A549 (cell line): ENCODE measurements at regions of chr12 and their contacts with region 1.

Region 1: DNA sequence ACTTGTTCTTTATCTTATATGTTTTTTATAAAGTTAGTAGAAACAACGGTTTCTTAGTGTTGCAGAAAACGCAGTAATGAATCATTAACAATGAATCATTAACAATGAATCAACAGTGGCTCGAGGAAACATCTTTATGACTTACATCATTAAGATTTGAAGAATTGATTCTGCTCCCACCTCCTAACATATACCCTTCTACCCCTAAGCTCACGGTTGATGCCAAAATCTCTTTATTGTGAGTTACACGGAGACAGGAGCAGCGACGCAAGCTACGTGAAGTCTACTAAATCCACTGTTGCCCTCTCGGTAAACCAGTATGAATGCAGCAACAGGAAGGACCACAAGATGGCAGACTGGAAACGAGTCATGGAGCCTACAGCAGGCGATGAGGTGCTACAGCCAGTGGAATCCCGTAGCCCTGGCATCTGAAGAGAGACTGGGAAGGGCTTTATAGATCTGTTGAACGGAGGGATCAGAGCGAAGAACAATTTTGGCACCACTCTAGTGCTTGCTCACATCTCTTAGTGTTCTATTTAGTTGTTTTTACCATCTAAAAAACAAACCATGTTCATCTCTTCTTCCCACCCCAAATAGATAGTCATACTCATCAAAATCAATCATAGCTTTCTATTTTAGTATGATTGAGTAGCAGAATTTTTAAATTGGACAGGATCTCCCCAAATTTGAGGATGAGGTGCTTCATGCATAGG is 332.7 kb downstream of the DUSP6 start:
- DNase-seq: peak; percentile 57 to 88
- ATAC-seq: peak; percentile 98 to 99
- H3K4me3 ChIP-seq: peak overlapping the region; percentile 43
- H3K27ac ChIP-seq: peak overlapping the region; percentile 36 to 66; a peak in 5 of 6 replicates
- H3K4me1 ChIP-seq: peaks cover 10% of the 10 kb centered on the region; the same call in 2 of the 3 replicates
- CTCF ChIP-seq: peak; percentile 92
- EP300 ChIP-seq: no peak
- POLR2A ChIP-seq: no peak
- RAD21 ChIP-seq: peak; percentile 92 to 95

Region 2: DNA sequence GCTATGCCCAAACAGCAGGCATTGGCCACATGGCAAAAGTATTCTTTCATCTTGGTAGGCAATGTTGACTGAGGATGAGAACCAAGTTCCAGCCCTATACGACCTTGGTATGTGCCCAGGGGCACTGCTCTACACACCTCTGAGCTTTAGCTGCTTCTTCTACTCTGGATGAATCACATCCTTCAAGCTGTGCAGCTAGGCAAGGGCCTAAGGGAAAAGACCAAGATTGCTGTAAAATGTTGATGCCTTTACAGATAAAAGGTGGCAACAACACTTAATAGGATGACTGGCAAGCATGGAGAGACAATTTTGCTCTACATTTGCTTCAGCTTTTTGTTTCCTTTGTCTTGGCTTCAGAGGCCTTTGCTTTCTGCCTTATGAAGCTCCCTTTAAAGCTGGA is 256.0 kb before region 1 on chr12:
- CTCF ChIA-PET with region 1: no interaction called
- POLR2A ChIA-PET with region 1: no interaction called
- DNase-seq: no peak
- ATAC-seq: no peak
- H3K4me3 ChIP-seq: no peak overlapping the region
- H3K27ac ChIP-seq: no peak overlapping the region
- H3K4me1 ChIP-seq: no peaks in the 10 kb centered on the region
- CTCF ChIP-seq: no peak
- EP300 ChIP-seq: no peak
- POLR2A ChIP-seq: no peak
- RAD21 ChIP-seq: no peak

Region 3: GRCh38 chr12:89029961-89030360 is 10.4 kb after region 1 on chr12:
- CTCF ChIA-PET with region 1: interaction called, 13 read pairs
- POLR2A ChIA-PET with region 1: no interaction called
- DNase-seq: no peak
- ATAC-seq: no peak
- H3K4me3 ChIP-seq: no peak overlapping the region
- H3K27ac ChIP-seq: no peak overlapping the region
- H3K4me1 ChIP-seq: no peaks in the 10 kb centered on the region
- CTCF ChIP-seq: no peak
- EP300 ChIP-seq: no peak
- POLR2A ChIP-seq: no peak
- RAD21 ChIP-seq: no peak

Region 4: DNA sequence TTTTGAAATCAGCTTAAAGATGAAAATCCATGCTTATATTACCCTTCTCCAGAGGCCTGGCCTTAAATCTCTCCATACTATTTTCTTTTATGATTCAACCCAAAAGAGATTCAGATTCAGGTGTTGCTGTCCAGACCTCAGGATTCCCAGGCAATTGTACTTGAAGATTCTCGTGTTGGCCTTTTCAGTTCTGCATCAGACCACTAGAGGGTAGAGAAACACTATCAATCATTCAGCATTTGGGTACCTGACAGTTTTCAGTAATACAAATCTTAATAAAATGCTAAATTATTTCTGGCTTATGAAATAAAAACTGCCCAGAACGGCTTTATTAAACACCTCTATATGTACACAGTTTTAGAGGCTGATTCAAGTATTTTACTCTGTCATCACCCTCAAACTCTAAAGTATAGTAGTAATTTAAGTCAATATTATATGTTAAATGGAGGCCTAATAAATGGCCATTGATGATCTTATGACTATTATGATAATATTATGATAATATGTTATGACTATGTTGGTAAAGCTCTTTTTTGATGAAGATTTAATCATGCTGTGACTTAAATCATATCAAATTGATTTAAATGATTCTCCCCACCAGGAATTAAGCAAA is 31.6 kb after region 1 on chr12:
- CTCF ChIA-PET with region 1: interaction called, 10 read pairs
- POLR2A ChIA-PET with region 1: no interaction called
- DNase-seq: peak; percentile 51 to 74
- ATAC-seq: peak; percentile 80 to 92; a peak in 5 of 6 replicates
- H3K4me3 ChIP-seq: no peak overlapping the region
- H3K27ac ChIP-seq: no peak overlapping the region
- H3K4me1 ChIP-seq: no peaks in the 10 kb centered on the region
- CTCF ChIP-seq: peak; percentile 94
- EP300 ChIP-seq: no peak
- POLR2A ChIP-seq: no peak
- RAD21 ChIP-seq: peak; percentile 95 to 98

Region 5: GRCh38 chr12:89352492-89353187 is 333.1 kb after region 1 on chr12 and contains the start of gene DUSP6:
- CTCF ChIA-PET with region 1: interaction called, 5 read pairs
- POLR2A ChIA-PET with region 1: interaction called, 13 read pairs
- DNase-seq: peak; percentile 98 to 99
- ATAC-seq: peak; percentile 80 to 87
- H3K4me3 ChIP-seq: peak within 1 kb of the TSS; percentile 70
- H3K27ac ChIP-seq: peak within 1 kb of the TSS; percentile 98 to 99
- H3K4me1 ChIP-seq: peaks cover 30% of the 10 kb centered on the region
- CTCF ChIP-seq: no peak
- EP300 ChIP-seq: peak in 1 of 2 experiments; percentile 39; a peak in 1 of 5 replicates
- POLR2A ChIP-seq: peak; percentile 37
- RAD21 ChIP-seq: peak in 1 of 2 experiments; percentile 17; a peak in 1 of 5 replicates
- polyA plus RNA-seq, gene DUSP6: 27.0 and 31.4 TPM in 2 replicates

Region 6: GRCh38 chr12:89470741-89471509 is 451.4 kb after region 1 on chr12:
- CTCF ChIA-PET with region 1: interaction called, 19 read pairs
- POLR2A ChIA-PET with region 1: no interaction called
- DNase-seq: peak; percentile 20 to 70
- ATAC-seq: peak; percentile 90 to 95
- H3K4me3 ChIP-seq: no peak overlapping the region
- H3K27ac ChIP-seq: peak overlapping the region in 1 of 2 experiments; percentile 43; a peak in 1 of 6 replicates
- H3K4me1 ChIP-seq: peaks cover 51% of the 10 kb centered on the region
- CTCF ChIP-seq: peak; percentile 83
- EP300 ChIP-seq: no peak
- POLR2A ChIP-seq: no peak
- RAD21 ChIP-seq: peak; percentile 83 to 86

Region 7: GRCh38 chr12:89529738-89530137 is 510.2 kb after region 1 on chr12:
- CTCF ChIA-PET with region 1: interaction called, 23 read pairs
- POLR2A ChIA-PET with region 1: no interaction called
- DNase-seq: peak; percentile 66 to 67
- ATAC-seq: no peak
- H3K4me3 ChIP-seq: no peak overlapping the region
- H3K27ac ChIP-seq: peak overlapping the region in 1 of 2 experiments; percentile 31; a peak in 1 of 6 replicates
- H3K4me1 ChIP-seq: peaks cover 10% of the 10 kb centered on the region; the same call in 2 of the 3 replicates
- CTCF ChIP-seq: peak; percentile 84
- EP300 ChIP-seq: no peak
- POLR2A ChIP-seq: no peak
- RAD21 ChIP-seq: peak; percentile 89 to 92